GM12878 (cell line): ENCODE measurements at regions of chr2 and their contacts with region 1.

Region 1: GRCh38 chr2:241788572-241788971 is 11.9 kb downstream of the GAL3ST2 start:
- DNase-seq: peak; percentile 74
- ATAC-seq: peak; percentile 96
- H3K4me3 ChIP-seq: no peak overlapping the region
- H3K27ac ChIP-seq: peak overlapping the region; percentile 78
- H3K4me1 ChIP-seq: peaks cover 19% of the 10 kb centered on the region
- H3K27me3 ChIP-seq: no peaks in the 10 kb centered on the region
- CTCF ChIP-seq: peak; percentile 5 to 23 (median 10); a peak in 2 of 6 replicates
- EP300 ChIP-seq: peak in 1 of 2 experiments; percentile 71; a peak in 2 of 4 replicates
- POLR2A ChIP-seq: no peak
- RAD21 ChIP-seq: peak; percentile 35; the same call in 1 of the 2 replicates

Region 2: GRCh38 chr2:241865957-241866789 is 77.6 kb after region 1 on chr2:
- CTCF ChIA-PET with region 1: no interaction called
- POLR2A ChIA-PET with region 1: interaction called, 12 read pairs
- RAD21 ChIA-PET with region 1: no interaction called
- SMC1A ChIA-PET with region 1: interaction called, 5 read pairs
- in situ Hi-C with region 1: no loop called
- intact Hi-C with region 1: no loop called
- DNase-seq: no peak
- ATAC-seq: peak; percentile 33; the same call in 2 of the 3 replicates
- H3K4me3 ChIP-seq: no peak overlapping the region
- H3K27ac ChIP-seq: no peak overlapping the region
- H3K4me1 ChIP-seq: peaks cover 20% of the 10 kb centered on the region
- H3K27me3 ChIP-seq: no peaks in the 10 kb centered on the region; a peak in 1 of 4 replicates
- CTCF ChIP-seq: no peak
- EP300 ChIP-seq: no peak
- POLR2A ChIP-seq: no peak
- RAD21 ChIP-seq: no peak